AG04450 (cell line): ENCODE measurements at regions of chr1 and their contacts with region 1.

Region 1: GRCh38 chr1:100265931-100266740 is at the start of gene RTCA:
- DNase-seq: peak; percentile 88
- H3K4me3 ChIP-seq: peak within 1 kb of the TSS; percentile 89
- H3K27ac ChIP-seq: peak within 1 kb of the TSS; percentile 68
- H3K27me3 ChIP-seq: no peaks in the 10 kb centered on the region
- CTCF ChIP-seq: no peak
- polyA plus RNA-seq, gene RTCA: 35.2 and 48.8 TPM in 2 replicates

Region 2: DNA sequence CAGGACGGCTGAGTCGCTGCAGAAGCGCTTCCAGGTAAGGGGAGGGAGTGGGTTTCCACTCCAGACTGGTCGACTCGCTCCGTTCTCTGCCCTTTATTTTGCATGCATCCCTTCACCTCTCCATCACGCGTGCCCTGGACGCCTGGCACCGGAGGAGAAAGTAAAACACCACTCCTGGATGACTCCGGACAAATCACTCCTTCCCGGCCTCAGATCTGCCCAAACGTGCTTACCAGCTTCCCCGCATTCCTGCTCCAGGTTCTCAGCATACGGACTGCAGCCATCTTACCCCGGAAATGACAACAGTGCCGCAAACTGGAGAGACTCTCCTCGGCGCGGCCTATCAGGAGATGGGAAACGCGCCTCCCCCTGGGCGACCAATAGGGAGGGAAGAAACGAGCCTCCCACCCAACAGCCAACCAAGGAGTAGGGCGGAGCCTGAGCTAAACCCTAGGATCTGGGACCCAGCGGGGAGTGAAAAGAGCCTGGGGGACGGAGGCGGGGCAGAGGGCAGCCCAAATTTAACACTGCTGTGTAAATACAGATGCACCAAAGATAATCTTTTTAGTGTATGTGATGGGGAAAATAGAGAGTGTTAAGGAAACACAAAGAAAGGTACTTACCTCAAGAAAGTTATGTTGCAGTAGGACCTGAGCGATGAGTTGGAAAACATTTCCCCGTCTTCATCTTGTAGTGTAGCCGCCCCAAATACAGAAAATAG is 16.4 kb before region 1 on chr1 and contains the start of gene DBT:
- CTCF ChIA-PET with region 1: interaction called, 5 read pairs
- POLR2A ChIA-PET with region 1: interaction called, 11 read pairs
- DNase-seq: peak; percentile 78
- H3K4me3 ChIP-seq: peak within 1 kb of the TSS; percentile 98
- H3K27ac ChIP-seq: peak within 1 kb of the TSS; percentile 69
- H3K27me3 ChIP-seq: no peaks in the 10 kb centered on the region
- CTCF ChIP-seq: no peak
- polyA plus RNA-seq, gene DBT: 9.0 and 11.4 TPM in 2 replicates